ENCODE measurements at regions of chr3 and their contacts with region 1.

Region 1: DNA sequence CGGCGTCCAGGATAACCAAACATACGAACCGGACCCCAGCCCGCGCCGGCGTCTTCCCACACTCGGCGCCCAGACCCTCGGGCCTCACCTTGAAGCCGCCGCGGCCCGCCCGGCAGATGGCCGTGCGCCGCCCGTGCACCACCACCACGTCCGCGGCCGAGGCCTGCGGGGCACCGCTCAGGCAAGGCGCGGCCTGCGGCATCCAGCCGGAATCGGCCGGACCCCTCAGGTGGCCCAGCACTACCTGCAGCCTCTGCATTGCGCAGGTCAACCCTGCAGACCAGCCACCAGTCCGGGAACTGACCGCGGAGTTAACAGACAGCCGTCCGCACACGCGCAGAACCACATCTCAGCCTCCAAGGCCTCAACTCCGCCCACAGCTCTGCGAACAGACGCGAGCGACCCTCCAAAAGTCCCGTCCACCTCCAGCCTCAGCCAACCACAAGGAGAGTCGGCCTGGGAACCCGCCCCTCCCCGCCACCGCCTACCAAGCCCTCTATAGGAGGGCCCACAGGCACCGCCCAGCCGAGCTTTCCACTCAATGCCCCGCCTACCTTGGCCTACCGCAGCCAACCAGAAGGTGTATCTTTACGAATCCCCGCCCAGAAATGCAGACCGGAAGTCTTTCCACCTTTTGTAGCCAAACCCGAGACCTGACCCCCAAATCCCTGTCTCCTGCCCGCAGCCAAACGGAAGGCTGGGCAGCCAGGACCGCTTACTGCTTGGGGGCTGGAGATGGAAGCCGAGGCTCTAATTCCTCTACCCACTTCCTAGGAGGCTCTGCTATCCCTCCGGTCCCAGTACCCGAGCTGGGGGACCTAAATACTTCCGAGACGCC is at the start of gene ACAA1:
- DNase-seq: peak; percentile 99
- H3K4me3 Mint-ChIP-seq: peak within 1 kb of the TSS; percentile 80
- H3K27ac Mint-ChIP-seq: peak within 1 kb of the TSS; percentile 93
- H3K4me1 Mint-ChIP-seq: peaks cover 55% of the 10 kb centered on the region
- H3K27me3 Mint-ChIP-seq: no peaks in the 10 kb centered on the region
- total RNA-seq, gene ACAA1: 55.5 to 57.7 TPM

Region 2: DNA sequence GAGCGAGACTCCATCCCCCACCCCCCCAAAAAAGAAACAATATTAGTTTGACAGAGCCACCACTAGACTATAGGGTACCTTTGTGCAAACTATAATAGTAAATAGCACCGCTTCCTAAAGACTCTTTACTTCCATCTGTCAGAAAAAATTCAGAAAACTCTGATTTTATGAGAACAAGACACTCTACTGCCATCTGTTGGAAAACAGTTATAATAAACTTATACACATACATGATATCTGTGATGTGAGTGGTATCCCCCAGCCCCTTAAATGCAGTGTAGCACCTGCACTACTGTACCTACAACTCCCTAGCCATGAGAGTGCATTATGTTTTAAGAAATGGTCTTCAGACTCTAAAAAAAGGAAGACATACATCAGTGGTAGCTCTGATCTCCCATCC is 322.4 kb before region 1 on chr3:
- CTCF ChIA-PET with region 1: no interaction called
- POLR2A ChIA-PET with region 1: no interaction called
- intact Hi-C with region 1: no loop called
- DNase-seq: no peak
- H3K4me3 Mint-ChIP-seq: no peak overlapping the region
- H3K27ac Mint-ChIP-seq: no peak overlapping the region
- H3K4me1 Mint-ChIP-seq: no peaks in the 10 kb centered on the region
- H3K27me3 Mint-ChIP-seq: peaks cover 5% of the 10 kb centered on the region

Region 3: DNA sequence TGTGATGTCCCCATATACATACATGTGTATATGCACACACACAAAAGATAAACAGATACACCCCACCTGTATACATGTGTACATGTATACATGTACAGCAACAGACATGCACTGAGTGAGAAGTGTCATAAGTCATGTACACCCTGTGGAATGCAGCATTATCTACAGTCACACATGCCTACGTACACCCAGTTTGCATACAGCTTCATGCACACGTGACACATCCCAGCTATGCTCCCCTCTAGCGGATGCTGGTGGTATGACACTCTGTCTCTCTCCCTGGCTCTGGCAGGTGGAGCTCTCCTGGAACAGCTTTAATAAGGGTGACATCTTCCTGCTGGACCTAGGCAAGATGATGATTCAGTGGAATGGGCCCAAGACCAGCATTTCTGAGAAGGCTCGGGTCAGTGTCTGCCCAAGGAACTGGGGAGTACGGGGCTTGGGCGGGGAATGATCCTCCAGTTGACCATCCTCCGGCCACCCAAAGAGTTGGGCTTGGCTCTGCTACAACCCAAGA is 140.2 kb before region 1 on chr3:
- CTCF ChIA-PET with region 1: interaction called, 6 read pairs
- POLR2A ChIA-PET with region 1: no interaction called
- intact Hi-C with region 1: loop called (anchors 1 kb)
- DNase-seq: peak; percentile 91
- H3K4me3 Mint-ChIP-seq: no peak overlapping the region
- H3K27ac Mint-ChIP-seq: peak overlapping the region; percentile 94
- H3K4me1 Mint-ChIP-seq: peaks cover 59% of the 10 kb centered on the region
- H3K27me3 Mint-ChIP-seq: no peaks in the 10 kb centered on the region

Region 4: GRCh38 chr3:38205472-38205805 is 68.4 kb after region 1 on chr3:
- CTCF ChIA-PET with region 1: no interaction called
- POLR2A ChIA-PET with region 1: no interaction called
- intact Hi-C with region 1: loop called (anchors 2 kb)
- DNase-seq: peak; percentile 54
- H3K4me3 Mint-ChIP-seq: no peak overlapping the region
- H3K27ac Mint-ChIP-seq: peak overlapping the region; percentile 2
- H3K4me1 Mint-ChIP-seq: peaks cover 59% of the 10 kb centered on the region
- H3K27me3 Mint-ChIP-seq: no peaks in the 10 kb centered on the region

Region 5: DNA sequence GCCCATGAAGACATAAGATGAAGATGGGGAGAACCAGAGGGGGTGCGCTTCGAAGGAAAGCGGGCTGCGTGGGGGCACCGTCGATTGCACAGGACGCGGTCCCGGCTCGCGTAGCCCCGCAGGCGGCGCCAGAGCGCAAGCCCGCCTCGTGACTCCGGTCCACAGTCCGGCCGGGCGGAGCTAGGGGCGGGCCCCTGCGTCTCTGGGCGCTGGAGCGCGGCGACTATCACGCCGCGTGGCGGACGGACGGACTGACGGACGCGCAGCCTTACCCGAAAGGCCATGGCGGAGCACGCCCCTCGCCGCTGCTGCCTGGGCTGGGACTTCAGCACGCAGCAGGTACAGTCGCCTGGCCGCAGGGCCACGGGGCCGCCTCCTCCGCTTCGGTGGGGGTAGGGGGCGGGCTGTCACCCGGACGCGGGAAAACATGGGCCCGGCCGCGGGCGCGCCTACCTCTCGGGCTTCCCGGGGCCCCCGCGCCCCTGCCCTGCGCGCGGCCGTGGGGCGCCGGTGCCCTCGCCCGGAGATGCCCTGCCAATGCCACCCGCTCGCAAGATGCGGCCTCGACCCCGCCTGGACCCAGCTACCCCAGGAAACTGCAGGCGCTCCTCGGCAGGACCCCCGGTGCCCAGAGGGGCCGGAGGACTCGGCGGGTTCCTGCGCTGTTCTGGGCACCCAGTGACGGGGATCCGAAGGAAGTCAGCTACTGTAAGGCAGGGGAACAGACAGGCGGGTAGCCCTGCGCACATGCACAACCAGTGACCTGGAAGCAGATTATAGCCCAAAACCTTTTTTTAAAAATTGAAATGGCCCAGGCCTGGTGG is 209.8 kb after region 1 on chr3 and contains the start of gene XYLB:
- CTCF ChIA-PET with region 1: interaction called, 11 read pairs
- POLR2A ChIA-PET with region 1: no interaction called
- intact Hi-C with region 1: loop called (anchors 2 kb)
- DNase-seq: peak; percentile 84
- H3K4me3 Mint-ChIP-seq: peak within 1 kb of the TSS; percentile 71
- H3K27ac Mint-ChIP-seq: no peak within 1 kb of the TSS
- H3K4me1 Mint-ChIP-seq: peaks cover 6% of the 10 kb centered on the region
- H3K27me3 Mint-ChIP-seq: no peaks in the 10 kb centered on the region
- total RNA-seq, gene XYLB: 4.8 to 4.9 TPM

Region 6: GRCh38 chr3:38479431-38480092 is 342.6 kb after region 1 on chr3:
- CTCF ChIA-PET with region 1: interaction called, 3 read pairs
- POLR2A ChIA-PET with region 1: no interaction called
- intact Hi-C with region 1: loop called (anchors 5 kb)
- DNase-seq: peak; percentile 58
- H3K4me3 Mint-ChIP-seq: no peak overlapping the region
- H3K27ac Mint-ChIP-seq: no peak overlapping the region
- H3K4me1 Mint-ChIP-seq: no peaks in the 10 kb centered on the region
- H3K27me3 Mint-ChIP-seq: no peaks in the 10 kb centered on the region